ENCODE measurements at regions of chr17 and their contacts with region 1.

Region 1: GRCh38 chr17:8435245-8436168 is at the start of gene NDEL1:
- DNase-seq: peak; percentile 98
- H3K4me3 ChIP-seq: peak within 1 kb of the TSS; percentile 89 to 99
- H3K27ac ChIP-seq: peak within 1 kb of the TSS; percentile 99 to 100
- H3K4me1 ChIP-seq: no peaks in the 10 kb centered on the region
- H3K27me3 ChIP-seq: no peaks in the 10 kb centered on the region
- CTCF ChIP-seq: no peak
- POLR2A ChIP-seq: peak; percentile 100
- total RNA-seq, gene NDEL1: 32.5 to 62.2 TPM

Region 2: DNA sequence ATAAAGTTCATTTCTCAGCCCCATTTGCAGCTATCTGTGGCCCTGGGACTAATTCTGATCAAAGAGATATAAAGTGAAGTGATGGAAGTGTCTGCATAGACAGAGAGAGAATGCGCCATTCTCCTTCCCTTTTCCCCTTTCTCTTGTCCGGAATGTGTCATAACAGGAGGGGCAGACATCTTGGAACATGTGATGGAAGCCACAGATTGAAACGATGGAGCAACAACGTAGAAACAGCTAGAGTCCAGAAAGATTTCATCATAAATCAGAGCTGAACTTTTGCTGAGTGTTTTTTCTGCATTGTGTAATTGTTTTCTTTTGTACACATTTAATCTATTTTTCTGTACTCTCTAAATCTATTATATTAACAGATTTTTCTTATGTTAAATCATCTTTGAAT is 1267.7 kb before region 1 on chr17:
- intact Hi-C with region 1: no loop called
- DNase-seq: no peak
- H3K4me3 ChIP-seq: no peak overlapping the region
- H3K27ac ChIP-seq: no peak overlapping the region
- H3K4me1 ChIP-seq: no peaks in the 10 kb centered on the region
- H3K27me3 ChIP-seq: no peaks in the 10 kb centered on the region
- CTCF ChIP-seq: no peak
- POLR2A ChIP-seq: no peak

Region 3: DNA sequence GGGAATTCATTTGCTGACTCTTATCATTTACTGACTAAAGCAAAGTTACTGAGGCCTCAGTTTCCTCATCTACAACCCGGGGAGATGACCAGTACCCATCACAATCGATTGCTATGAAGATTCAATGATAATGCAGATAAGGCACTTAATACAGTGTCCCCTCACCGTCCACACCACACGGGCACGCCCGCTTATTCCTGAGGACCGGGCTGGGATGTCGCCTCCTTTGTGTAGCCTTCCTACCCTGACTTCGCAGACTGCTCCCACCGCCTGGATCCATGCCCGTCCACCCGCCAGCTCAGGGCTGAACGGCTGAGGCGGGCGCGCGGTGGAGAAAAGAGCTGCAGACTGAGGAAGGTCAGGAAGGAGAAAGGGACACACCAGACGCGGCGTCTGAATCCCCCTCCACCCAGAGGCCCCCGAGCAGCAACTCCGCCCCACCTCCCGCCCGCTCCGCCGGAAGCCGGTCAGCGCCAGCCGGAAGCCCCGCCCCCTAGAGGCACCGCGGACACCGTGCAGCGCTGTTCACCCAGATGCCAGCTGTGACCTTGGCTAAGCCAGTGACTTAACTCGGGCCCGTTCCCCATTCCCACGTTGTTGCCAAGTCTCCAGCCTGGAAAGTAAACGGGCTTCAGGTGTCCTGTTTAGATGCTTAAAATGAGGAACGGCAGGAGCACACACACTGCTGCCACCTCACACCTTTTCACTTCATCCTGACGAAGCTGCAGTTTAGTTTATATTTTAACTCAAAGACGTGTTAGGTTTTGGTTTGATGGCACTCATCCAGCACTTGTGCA is 59.0 kb before region 1 on chr17 and contains the start of gene KRABD2:
- intact Hi-C with region 1: loop called (anchors 5 kb)
- DNase-seq: peak; percentile 83
- H3K4me3 ChIP-seq: peak within 1 kb of the TSS; percentile 52 to 63
- H3K27ac ChIP-seq: peak within 1 kb of the TSS; percentile 92
- H3K4me1 ChIP-seq: peaks cover 22% of the 10 kb centered on the region
- H3K27me3 ChIP-seq: no peaks in the 10 kb centered on the region
- CTCF ChIP-seq: peak; percentile 10 to 72 (median 70)
- POLR2A ChIP-seq: peak; percentile 66

Region 4: GRCh38 chr17:8630802-8631553 is 195.5 kb after region 1 on chr17:
- intact Hi-C with region 1: loop called (anchors 2 kb)
- DNase-seq: peak; percentile 100
- H3K4me3 ChIP-seq: peak overlapping the region; percentile 72 to 90
- H3K27ac ChIP-seq: peak overlapping the region; percentile 86 to 87
- H3K4me1 ChIP-seq: no peaks in the 10 kb centered on the region
- H3K27me3 ChIP-seq: no peaks in the 10 kb centered on the region
- CTCF ChIP-seq: peak in 1 of 4 experiments; percentile 46
- POLR2A ChIP-seq: peak; percentile 2

Region 5: GRCh38 chr17:9056566-9056965 is 621.1 kb after region 1 on chr17:
- intact Hi-C with region 1: no loop called
- DNase-seq: no peak
- H3K4me3 ChIP-seq: no peak overlapping the region
- H3K27ac ChIP-seq: no peak overlapping the region
- H3K4me1 ChIP-seq: no peaks in the 10 kb centered on the region
- H3K27me3 ChIP-seq: no peaks in the 10 kb centered on the region
- CTCF ChIP-seq: no peak
- POLR2A ChIP-seq: no peak

Measured in prostate gland (tissue), 2 donors.